ENCODE measurements at regions of chr4 and their contacts with region 1.

Region 1: DNA sequence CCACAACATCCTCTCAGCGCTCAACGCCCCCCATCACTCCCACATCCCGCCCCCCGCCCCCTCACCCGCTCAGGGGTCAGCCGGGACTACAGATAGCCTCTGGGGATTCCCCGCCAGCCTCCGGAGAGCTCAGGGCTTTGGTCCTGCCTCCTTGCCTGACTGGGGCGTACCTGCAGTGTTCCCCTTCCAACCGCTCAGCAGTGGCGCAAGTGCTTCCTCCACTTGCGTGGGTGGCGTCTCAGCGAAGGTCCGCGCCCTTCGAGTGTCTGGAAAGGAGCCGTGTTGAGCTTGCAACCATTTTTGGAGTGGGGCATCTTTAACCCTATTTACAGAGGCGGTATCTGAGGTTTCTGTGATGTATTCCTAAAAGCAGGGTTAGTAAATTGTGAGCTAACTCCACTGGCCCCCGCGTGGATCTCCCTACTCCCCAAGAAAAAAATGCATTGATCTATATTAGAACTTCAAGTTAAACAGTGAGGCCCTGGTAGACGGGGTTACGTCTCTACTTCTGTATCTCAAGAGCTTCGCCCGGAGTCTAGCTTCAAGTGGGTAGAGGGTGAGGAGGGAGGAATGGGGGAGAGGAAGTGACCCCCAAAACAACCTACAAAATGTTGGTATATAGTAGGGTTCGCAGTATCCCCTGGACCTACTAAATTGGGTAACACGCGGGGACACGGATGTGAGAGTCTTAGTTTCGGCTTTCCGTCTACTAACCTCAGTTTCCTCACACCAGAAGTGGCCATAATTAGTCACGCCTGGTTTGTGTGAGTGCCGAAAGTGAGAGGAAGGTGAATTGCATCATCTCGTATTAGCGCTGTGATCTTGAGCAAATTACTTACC is 16.1 kb downstream of the NKX3-2 start:
- DNase-seq: no peak
- ATAC-seq: no peak
- H3K4me3 ChIP-seq: no peak overlapping the region
- H3K27ac ChIP-seq: no peak overlapping the region
- H3K4me1 ChIP-seq: no peaks in the 10 kb centered on the region
- H3K27me3 ChIP-seq: peaks cover 95% of the 10 kb centered on the region
- CTCF ChIP-seq: no peak
- POLR2A ChIP-seq: no peak
- RAD21 ChIP-seq: no peak

Region 2: GRCh38 chr4:13998850-13999445 is 470.7 kb after region 1 on chr4:
- CTCF ChIA-PET with region 1: interaction called, 10 read pairs
- POLR2A ChIA-PET with region 1: no interaction called
- dilution Hi-C with region 1: no loop called
- in situ Hi-C with region 1: no loop called
- intact Hi-C with region 1: no loop called
- DNase-seq: no peak
- ATAC-seq: no peak
- H3K4me3 ChIP-seq: no peak overlapping the region
- H3K27ac ChIP-seq: no peak overlapping the region
- H3K4me1 ChIP-seq: no peaks in the 10 kb centered on the region
- H3K27me3 ChIP-seq: no peaks in the 10 kb centered on the region
- CTCF ChIP-seq: no peak
- POLR2A ChIP-seq: no peak
- RAD21 ChIP-seq: no peak